Esophagus muscularis mucosa (tissue), 4 donors: ENCODE measurements at regions of chr1 and their contacts with region 1.

Region 1: GRCh38 chr1:156480411-156481192 is 20.0 kb downstream of the MEF2D start:
- DNase-seq: no peak
- H3K4me3 ChIP-seq: no peak overlapping the region
- H3K27ac ChIP-seq: peak overlapping the region; percentile 87 to 100 (median 91)
- H3K4me1 ChIP-seq: peaks cover 93 to 100% (median 100%) of the 10 kb centered on the region in 4 donors
- H3K27me3 ChIP-seq: no peaks in the 10 kb centered on the region
- CTCF ChIP-seq: peak; percentile 57 to 75 (median 59)
- EP300 ChIP-seq: no peak
- POLR2A ChIP-seq: no peak

Region 2: DNA sequence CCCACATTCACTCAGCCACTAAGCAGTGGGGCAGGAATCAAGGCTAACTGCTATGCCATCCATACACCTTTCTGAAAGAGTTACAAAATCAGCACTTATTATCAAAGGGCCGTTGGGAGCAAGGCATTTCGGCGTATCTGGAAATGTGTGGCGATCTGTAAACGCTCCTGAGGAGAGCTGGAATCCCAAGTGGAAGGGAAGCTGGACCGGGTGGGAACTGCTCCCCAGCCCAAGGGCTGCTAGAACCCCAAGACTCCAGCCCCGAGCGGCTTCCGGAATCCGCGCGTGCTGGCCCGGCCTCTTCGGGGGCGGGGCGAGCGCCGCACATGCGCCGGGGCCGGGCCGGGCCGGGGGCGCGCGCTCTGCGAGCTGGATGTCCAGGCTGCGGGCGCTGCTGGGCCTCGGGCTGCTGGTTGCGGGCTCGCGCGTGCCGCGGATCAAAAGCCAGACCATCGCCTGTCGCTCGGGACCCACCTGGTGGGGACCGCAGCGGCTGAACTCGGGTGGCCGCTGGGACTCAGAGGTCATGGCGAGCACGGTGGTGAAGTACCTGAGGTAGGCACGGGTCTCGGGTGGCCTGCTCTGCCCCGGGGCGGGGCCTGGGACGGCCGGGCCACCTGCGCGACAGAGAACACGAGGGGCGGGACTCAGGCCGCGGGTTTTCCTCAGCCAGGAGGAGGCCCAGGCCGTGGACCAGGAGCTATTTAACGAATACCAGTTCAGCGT is 111.0 kb after region 1 on chr1 and contains the start of gene NAXE:
- intact Hi-C with region 1: loop called (anchors 10 kb)
- DNase-seq: peak; percentile 93
- H3K4me3 ChIP-seq: peak within 1 kb of the TSS; percentile 72 to 87 (median 80)
- H3K27ac ChIP-seq: peak within 1 kb of the TSS; percentile 85 to 91 (median 88)
- H3K4me1 ChIP-seq: peaks cover 11 to 21% (median 19%) of the 10 kb centered on the region in 4 donors
- H3K27me3 ChIP-seq: no peaks in the 10 kb centered on the region
- CTCF ChIP-seq: peak in 1 of 3 experiments; percentile 16
- EP300 ChIP-seq: no peak
- POLR2A ChIP-seq: peak; percentile 43
- total RNA-seq, gene NAXE: 73.5 to 98.0 (median 85.2) TPM